ENCODE measurements at regions of chr19 and their contacts with region 1.

Region 1: GRCh38 chr19:1260636-1261537 is 8.2 kb upstream of the CIRBP start:
- DNase-seq: peak; percentile 94 to 99 (median 98)
- ATAC-seq: peak; percentile 79
- H3K4me3 ChIP-seq: peak overlapping the region; percentile 78
- H3K4me3 Mint-ChIP-seq: peak overlapping the region; percentile 92
- H3K27ac ChIP-seq: peak overlapping the region; percentile 98 to 99
- H3K27ac Mint-ChIP-seq: peak overlapping the region; percentile 95
- H3K4me1 ChIP-seq: peaks cover 84% of the 10 kb centered on the region
- H3K4me1 Mint-ChIP-seq: peaks cover 46% of the 10 kb centered on the region
- H3K27me3 ChIP-seq: no peaks in the 10 kb centered on the region
- H3K27me3 Mint-ChIP-seq: no peaks in the 10 kb centered on the region
- CTCF ChIP-seq: no peak

Region 2: DNA sequence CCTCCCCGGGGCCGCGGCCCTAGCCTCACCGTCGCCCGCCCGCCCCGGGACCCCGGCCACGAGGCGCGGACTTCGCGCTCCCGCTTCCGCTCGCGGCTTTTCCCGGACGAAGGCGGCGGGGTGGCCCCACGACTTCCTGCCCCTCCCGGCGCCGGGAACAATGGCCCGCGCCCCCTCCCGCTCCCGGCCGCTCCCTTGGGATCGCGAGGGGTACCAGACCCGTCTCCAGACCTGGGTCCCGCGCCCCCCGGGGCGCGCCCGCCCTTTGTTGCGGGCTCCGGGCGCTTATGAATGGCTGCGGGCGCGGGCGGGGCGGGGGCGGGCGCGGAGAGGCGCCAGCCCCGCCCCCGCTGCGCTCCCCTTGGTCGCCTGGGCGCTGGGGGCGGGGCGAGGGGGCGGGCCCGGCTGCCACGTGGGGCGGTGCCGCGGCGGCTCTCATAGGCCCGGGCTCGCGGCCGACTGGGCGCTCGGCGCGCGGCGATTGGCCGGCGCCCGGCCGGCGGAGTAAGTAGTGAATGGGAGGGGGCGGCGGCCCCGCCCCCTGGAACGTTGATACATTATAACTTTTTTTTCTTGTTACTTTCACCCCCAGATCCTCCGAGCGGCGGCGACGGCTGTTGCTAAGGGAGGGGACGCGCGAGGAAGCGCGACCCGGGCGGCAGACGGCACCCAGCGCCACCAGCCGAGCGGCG is 11.4 kb before region 1 on chr19:
- CTCF ChIA-PET with region 1: interaction called, 255 read pairs
- POLR2A ChIA-PET with region 1: interaction called, 476 read pairs
- intact Hi-C with region 1: loop called (anchors 1 kb)
- DNase-seq: peak; percentile 90 to 99 (median 96)
- ATAC-seq: peak; percentile 55
- H3K4me3 ChIP-seq: peak overlapping the region; percentile 71
- H3K4me3 Mint-ChIP-seq: peak overlapping the region; percentile 97
- H3K27ac ChIP-seq: peak overlapping the region; percentile 69 to 86
- H3K27ac Mint-ChIP-seq: peak overlapping the region; percentile 92
- H3K4me1 ChIP-seq: peaks cover 55% of the 10 kb centered on the region
- H3K4me1 Mint-ChIP-seq: peaks cover 10% of the 10 kb centered on the region
- H3K27me3 ChIP-seq: no peaks in the 10 kb centered on the region
- H3K27me3 Mint-ChIP-seq: no peaks in the 10 kb centered on the region
- CTCF ChIP-seq: no peak

Region 3: DNA sequence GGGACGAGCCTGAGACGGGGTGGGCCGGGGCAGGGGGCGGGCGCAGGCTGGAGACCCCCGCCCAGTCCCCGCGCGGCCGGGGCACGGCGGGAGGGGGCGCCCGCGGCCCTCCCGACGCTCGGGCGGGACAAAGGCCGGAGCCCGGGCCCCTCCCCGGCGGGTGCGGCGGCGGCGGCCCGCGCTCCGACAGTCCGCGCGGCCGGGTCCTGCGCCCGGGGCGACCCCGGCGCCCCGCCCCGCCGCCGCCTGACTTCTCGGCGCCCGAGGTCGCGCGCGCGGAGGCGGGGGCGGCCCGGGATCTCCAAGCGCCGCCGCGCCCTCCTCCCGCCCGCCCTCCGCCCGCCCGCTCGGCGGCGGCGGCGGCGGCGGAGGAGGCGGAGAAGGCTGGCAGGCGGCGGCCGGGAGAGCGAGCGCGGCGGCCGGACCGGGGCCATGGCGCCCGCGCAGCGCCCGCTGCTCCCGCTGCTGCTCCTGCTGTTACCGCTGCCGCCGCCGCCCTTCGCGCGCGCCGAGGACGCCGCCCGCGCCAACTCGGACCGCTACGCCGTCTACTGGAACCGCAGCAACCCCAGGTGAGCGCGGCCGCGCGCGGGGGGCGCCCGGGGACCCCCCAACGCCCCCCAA is 25.0 kb after region 1 on chr19 and contains the start of gene EFNA2:
- CTCF ChIA-PET with region 1: no interaction called
- POLR2A ChIA-PET with region 1: no interaction called
- intact Hi-C with region 1: no loop called
- DNase-seq: no peak
- ATAC-seq: no peak
- H3K4me3 ChIP-seq: no peak within 1 kb of the TSS
- H3K4me3 Mint-ChIP-seq: peak within 1 kb of the TSS; percentile 8
- H3K27ac ChIP-seq: no peak within 1 kb of the TSS
- H3K27ac Mint-ChIP-seq: no peak within 1 kb of the TSS
- H3K4me1 ChIP-seq: peaks cover 14% of the 10 kb centered on the region
- H3K4me1 Mint-ChIP-seq: peaks cover 4% of the 10 kb centered on the region
- H3K27me3 ChIP-seq: peaks cover 42 to 50% of the 10 kb centered on the region in 2 experiments
- H3K27me3 Mint-ChIP-seq: peaks cover 26% of the 10 kb centered on the region
- CTCF ChIP-seq: no peak
- total RNA-seq, gene EFNA2: not detected

Measured in CD4-positive, alpha-beta T cell (primary cell).